ENCODE measurements at regions of chr14 and their contacts with region 1.

Region 1: DNA sequence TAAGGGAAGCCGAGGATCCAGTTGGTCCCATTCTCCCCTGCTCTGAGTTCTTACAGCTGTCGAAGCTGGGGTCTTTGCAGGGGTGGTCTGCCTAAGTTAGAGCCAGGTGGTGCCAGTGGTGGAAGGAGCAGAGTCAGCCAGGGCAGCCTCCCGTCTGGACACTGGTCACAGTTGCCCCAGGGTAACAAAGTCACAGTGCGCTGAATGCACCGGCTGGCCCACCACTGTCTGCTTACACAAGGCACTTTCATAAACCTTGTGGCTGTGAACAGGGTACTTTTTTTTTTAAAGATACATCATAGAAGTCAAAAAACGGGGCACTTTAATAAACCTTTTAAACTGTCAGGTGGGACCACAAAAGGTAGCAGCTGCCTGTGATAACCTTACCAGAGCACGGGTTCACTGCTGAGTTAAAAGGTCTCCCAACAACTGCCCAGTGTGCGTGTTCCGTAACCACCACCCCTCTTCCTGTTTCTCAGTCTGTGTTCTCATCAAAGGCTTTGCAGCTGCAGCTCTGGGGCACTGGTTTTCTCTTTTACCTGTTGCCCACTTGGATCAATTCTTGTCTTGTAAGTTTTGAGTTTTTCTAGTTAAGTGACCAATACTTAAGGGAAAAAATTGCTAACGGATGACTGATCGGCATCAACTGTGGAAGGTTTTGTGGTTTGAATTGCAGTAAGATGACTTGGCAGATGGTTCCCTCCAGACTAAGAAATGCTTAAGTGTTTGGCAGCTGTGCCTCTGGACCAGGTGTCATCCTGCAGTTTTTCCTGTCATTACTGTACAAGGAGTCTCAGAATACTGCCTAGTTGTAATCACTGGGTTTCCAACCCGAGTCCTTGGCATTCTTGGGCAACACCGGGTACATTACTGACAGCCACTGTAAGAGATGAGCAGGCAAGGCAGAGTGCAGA is 55.9 kb downstream of the DYNC1H1 start:
- DNase-seq: peak; percentile 79
- ATAC-seq: peak; percentile 89
- H3K4me3 Mint-ChIP-seq: peak overlapping the region; percentile 13
- H3K27ac Mint-ChIP-seq: peak overlapping the region; percentile 88
- H3K4me1 Mint-ChIP-seq: peaks cover 20% of the 10 kb centered on the region
- H3K27me3 Mint-ChIP-seq: no peaks in the 10 kb centered on the region

Region 2: DNA sequence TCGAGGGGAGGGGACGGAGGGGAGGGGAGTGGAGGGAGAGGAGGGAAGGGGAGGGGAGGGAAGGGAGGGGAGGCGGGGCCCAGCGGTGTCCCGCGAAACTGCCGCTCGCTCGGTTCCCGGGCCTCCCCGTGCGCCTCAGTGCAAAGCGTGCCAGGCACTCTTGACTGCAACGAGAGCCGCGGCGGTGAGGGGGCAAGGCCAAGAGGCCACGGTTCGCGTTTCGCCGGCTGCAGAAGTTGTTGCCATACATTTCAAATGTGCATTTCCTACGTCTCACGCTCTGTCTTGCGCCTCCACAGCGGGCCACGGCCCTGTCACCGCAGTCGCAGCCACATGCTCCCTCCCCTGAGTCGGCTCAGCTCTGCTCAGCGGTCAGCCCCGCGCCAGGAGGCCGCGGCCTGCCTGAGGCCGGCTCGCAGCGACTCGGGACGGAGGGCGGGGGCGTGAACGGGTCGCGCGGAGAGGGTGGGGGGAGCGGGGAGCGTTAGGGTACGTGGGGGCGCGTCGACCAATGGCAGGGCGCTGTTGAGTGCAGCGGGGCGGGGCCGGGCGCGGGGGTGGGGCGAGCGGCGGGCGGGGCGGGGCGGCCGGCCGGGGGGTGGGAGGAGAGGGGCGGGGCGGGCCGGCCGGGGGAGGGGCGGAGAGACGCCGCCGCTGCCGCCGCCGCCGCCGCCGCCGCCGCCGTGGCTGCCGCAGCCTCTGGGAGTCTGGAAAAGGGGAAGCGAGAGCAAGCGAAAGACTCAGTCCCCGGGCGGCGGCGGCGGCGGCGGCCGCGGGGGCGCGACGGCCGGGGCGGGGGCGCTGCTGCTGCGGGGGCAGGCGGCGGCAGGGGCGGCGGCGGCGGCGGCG is 259.1 kb before region 1 on chr14 and contains the start of gene PPP2R5C:
- CTCF ChIA-PET with region 1: no interaction called
- POLR2A ChIA-PET with region 1: interaction called, 4 read pairs
- intact Hi-C with region 1: loop called in 1 of 2 experiments (anchors 5 kb)
- DNase-seq: peak; percentile 94
- ATAC-seq: peak; percentile 65
- H3K4me3 Mint-ChIP-seq: peak within 1 kb of the TSS; percentile 85
- H3K27ac Mint-ChIP-seq: peak within 1 kb of the TSS; percentile 78
- H3K4me1 Mint-ChIP-seq: peaks cover 43% of the 10 kb centered on the region
- H3K27me3 Mint-ChIP-seq: no peaks in the 10 kb centered on the region
- total RNA-seq, gene PPP2R5C: 232 to 281 TPM

Region 3: DNA sequence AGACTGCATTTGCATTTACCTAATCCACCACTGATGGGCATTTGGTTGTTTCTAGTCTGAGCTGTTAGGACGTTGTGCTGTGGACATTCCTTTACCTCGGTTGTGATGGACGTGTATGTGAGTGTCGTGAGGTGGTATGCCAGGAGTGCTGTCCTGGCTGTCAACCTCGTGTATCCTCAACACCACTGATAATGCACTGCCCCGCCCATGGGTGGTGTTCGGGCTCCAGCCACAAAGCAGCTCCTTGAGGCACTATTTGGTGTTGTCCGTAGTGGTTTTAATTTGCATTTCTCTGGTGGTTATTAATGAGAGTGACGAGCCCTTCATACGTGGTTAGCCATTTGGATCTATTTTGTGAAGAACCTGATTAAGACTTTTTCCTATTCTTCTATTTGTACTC is 171.2 kb before region 1 on chr14:
- CTCF ChIA-PET with region 1: no interaction called
- POLR2A ChIA-PET with region 1: no interaction called
- intact Hi-C with region 1: no loop called
- DNase-seq: no peak
- ATAC-seq: no peak
- H3K4me3 Mint-ChIP-seq: no peak overlapping the region
- H3K27ac Mint-ChIP-seq: peak overlapping the region; percentile 64
- H3K4me1 Mint-ChIP-seq: peaks cover 89% of the 10 kb centered on the region
- H3K27me3 Mint-ChIP-seq: no peaks in the 10 kb centered on the region

Region 4: DNA sequence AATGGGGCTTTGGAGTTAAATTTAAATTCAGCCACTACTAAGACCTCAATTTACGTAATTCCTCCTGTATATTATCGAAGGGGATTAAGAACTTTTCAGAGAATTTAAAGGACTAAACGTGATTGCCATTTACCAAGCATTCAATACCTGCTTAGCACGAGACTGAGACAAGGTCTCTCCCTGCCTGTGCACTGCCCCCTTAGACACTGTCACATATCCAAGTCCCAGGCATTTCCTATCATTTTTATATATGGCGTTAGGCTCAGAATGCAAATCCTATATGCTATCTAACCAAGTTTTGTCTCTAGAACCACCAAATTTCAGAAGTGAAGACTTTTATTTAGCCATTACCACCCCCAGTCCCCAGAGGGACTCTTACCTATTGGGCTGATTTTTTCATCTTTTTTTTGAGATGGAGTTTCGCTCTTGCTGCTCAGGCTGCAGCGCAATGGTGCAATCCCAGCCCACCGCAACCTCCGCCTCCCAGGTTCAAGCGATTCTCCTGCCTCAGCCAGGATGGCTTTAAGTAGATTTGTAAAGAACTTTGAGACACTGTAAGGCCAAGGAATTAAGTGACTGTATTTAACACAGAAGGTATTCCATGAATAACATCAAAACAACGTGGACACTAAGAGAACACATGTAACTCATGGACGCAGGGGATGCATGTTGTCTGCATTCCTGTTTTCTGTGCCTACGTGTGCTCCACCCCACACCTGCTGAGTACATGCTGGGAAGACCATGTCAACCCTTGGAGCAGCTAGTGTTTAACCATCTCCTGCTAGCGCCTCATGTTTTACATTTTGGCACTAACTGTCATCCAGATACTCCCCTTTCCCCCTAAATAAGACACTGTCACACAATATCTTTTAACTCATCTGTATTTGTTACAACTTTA is 60.1 kb after region 1 on chr14:
- CTCF ChIA-PET with region 1: no interaction called
- POLR2A ChIA-PET with region 1: no interaction called
- intact Hi-C with region 1: loop called in 1 of 2 experiments (anchors 5 kb)
- DNase-seq: no peak
- ATAC-seq: no peak
- H3K4me3 Mint-ChIP-seq: peak overlapping the region; percentile 11
- H3K27ac Mint-ChIP-seq: peak overlapping the region; percentile 39
- H3K4me1 Mint-ChIP-seq: peaks cover 44% of the 10 kb centered on the region
- H3K27me3 Mint-ChIP-seq: no peaks in the 10 kb centered on the region

Region 5: DNA sequence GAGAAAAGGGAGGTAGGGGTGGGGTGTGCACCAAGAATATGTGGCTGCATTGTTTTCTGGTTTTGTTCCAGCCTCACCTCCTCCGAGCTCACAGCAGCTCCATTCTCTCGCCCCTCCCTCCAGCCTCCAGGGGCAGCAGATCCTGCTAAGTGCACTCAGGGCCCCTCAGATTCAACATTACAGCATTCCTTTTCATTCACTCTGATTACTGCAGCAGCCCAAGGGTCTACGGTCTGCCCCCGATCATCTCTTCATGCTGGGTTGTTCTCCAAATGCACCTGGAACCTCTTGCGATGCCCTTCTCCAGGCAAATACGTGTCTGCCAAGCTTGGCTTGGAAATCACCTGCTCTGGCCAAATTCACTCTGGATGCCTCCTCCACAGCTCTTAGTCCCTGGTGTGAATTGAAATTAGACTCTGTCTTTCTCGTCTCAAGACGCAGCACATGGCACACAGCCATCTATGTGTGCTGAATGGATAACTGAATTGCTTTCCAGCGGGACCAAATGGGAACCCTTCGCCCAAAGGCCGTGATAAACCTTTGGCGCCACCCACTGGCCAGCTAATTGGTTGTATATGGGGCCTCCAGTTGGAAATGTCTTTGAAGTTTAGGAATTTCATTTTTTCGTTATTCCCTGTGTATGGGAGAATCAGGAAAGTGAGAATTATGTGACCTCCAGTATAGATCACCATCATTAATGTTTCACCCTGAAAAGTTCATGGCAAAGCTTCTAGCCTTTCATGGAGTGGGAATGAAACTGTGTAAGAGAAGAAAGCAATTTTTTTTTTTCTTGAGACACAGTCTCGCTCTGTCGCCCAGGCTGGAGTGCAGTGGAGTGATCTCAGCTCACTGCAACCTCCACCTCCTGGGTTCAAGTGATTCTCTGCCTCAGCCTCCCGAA is 76.1 kb after region 1 on chr14:
- CTCF ChIA-PET with region 1: interaction called, 12 read pairs
- POLR2A ChIA-PET with region 1: no interaction called
- intact Hi-C with region 1: no loop called
- DNase-seq: peak; percentile 82
- ATAC-seq: peak; percentile 57
- H3K4me3 Mint-ChIP-seq: no peak overlapping the region
- H3K27ac Mint-ChIP-seq: peak overlapping the region; percentile 51
- H3K4me1 Mint-ChIP-seq: peaks cover 22% of the 10 kb centered on the region
- H3K27me3 Mint-ChIP-seq: no peaks in the 10 kb centered on the region

Region 6: DNA sequence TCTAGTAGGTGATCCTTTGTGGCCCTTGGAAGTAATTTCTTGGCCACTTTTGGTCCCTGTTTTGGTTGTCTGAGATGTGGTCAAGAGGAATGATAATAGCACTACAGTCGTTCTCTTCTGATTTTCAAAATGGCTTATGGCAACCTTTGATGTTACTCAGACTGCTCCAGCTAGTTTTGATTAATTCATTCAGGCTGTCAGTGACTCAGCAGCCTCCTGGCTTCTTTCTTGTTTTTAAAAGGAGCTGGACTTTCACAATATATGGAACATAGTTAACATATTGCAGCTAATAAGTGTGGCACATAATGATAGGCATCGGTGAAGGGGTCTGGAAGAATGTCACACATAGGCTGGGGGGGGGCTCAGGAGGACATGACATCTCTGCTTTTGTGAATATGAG is 166.7 kb after region 1 on chr14:
- CTCF ChIA-PET with region 1: no interaction called
- POLR2A ChIA-PET with region 1: no interaction called
- intact Hi-C with region 1: loop called in 1 of 2 experiments (anchors 1 kb)
- DNase-seq: no peak
- ATAC-seq: no peak
- H3K4me3 Mint-ChIP-seq: no peak overlapping the region
- H3K27ac Mint-ChIP-seq: peak overlapping the region; percentile 79
- H3K4me1 Mint-ChIP-seq: peaks cover 61% of the 10 kb centered on the region
- H3K27me3 Mint-ChIP-seq: no peaks in the 10 kb centered on the region

Region 7: DNA sequence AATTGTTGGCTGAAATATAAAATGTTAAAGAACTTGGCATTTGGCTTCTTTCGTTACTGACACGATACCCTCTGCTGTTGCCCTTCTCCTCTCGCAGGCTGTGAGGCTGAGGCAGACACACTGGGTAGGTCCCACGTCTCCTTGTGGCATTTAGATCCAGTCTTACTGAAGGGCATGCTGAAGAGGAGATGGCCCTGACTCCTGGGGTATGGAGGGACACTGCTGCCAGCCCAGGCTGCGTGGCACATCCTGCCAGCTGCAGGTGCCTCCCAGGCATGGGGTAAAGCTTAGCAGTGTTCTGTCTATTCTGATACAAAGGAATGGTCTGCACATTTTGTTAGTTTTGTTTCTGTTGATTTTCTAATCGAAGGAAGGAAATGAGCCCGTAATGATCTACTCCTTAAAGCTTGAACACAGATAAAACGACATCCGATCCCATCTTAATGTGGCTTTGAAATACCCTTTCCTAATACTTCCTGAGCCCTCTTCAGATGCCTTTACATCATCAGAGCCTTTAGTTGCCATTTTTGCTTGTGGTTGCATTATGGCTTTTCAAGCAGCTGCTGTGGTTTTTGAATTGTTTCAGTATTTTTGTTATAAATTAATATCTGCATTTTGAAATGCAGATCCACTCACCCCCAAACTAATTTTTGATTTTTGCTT is 180.5 kb after region 1 on chr14:
- CTCF ChIA-PET with region 1: no interaction called
- POLR2A ChIA-PET with region 1: no interaction called
- intact Hi-C with region 1: loop called in 1 of 2 experiments (anchors 1 kb)
- DNase-seq: peak; percentile 24
- ATAC-seq: peak; percentile 46
- H3K4me3 Mint-ChIP-seq: peak overlapping the region; percentile 24
- H3K27ac Mint-ChIP-seq: peak overlapping the region; percentile 56
- H3K4me1 Mint-ChIP-seq: peaks cover 59% of the 10 kb centered on the region
- H3K27me3 Mint-ChIP-seq: no peaks in the 10 kb centered on the region

Measured in activated CD4-positive, alpha-beta T cell treated with anti-CD3 and anti-CD28 coated beads for 36 hours (primary cell).